ENCODE measurements at regions of chrX and their contacts with region 1.

Region 1: GRCh38 chrX:144681501-144681900 is 565.8 kb upstream of the SPANXN1 start:
- DNase-seq: no peak
- ATAC-seq: peak; percentile 42; the same call in 1 of the 2 replicates
- H3K4me3 ChIP-seq: no peak overlapping the region
- H3K27ac ChIP-seq: no peak overlapping the region
- H3K4me1 ChIP-seq: no peaks in the 10 kb centered on the region
- H3K27me3 ChIP-seq: no peaks in the 10 kb centered on the region
- CTCF ChIP-seq: no peak

Region 2: GRCh38 chrX:142686653-142687283 is 1994.7 kb before region 1 on chrX:
- CTCF ChIA-PET with region 1: no interaction called
- POLR2A ChIA-PET with region 1: interaction called, 23 read pairs
- in situ Hi-C with region 1: no loop called
- intact Hi-C with region 1: no loop called
- DNase-seq: no peak
- ATAC-seq: no peak
- H3K4me3 ChIP-seq: no peak overlapping the region
- H3K27ac ChIP-seq: no peak overlapping the region
- H3K4me1 ChIP-seq: no peaks in the 10 kb centered on the region
- H3K27me3 ChIP-seq: no peaks in the 10 kb centered on the region
- CTCF ChIP-seq: no peak

Region 3: GRCh38 chrX:144388738-144389137 is 292.8 kb before region 1 on chrX:
- CTCF ChIA-PET with region 1: no interaction called
- POLR2A ChIA-PET with region 1: no interaction called
- in situ Hi-C with region 1: no loop called
- intact Hi-C with region 1: no loop called
- DNase-seq: no peak
- ATAC-seq: no peak
- H3K4me3 ChIP-seq: no peak overlapping the region
- H3K27ac ChIP-seq: no peak overlapping the region
- H3K4me1 ChIP-seq: no peaks in the 10 kb centered on the region
- H3K27me3 ChIP-seq: no peaks in the 10 kb centered on the region
- CTCF ChIP-seq: no peak

Measured in Panc1 (cell line).